B cell (primary cell): ENCODE measurements at regions of chr2 and their contacts with region 1.

Region 1: GRCh38 chr2:135797497-135798274 is 39.3 kb downstream of the LCT start:
- DNase-seq: peak; percentile 78
- ATAC-seq: peak; percentile 78
- H3K4me3 ChIP-seq: no peak overlapping the region
- H3K4me3 Mint-ChIP-seq: no peak overlapping the region
- H3K27ac ChIP-seq: no peak overlapping the region
- H3K27ac Mint-ChIP-seq: no peak overlapping the region
- H3K4me1 ChIP-seq: peaks cover 0 to 8% of the 10 kb centered on the region in 2 donors
- H3K4me1 Mint-ChIP-seq: peaks cover 13% of the 10 kb centered on the region
- H3K27me3 ChIP-seq: no peaks in the 10 kb centered on the region
- H3K27me3 Mint-ChIP-seq: no peaks in the 10 kb centered on the region
- CTCF ChIP-seq: peak; percentile 90

Region 2: GRCh38 chr2:134988994-134989605 is 808.6 kb before region 1 on chr2:
- CTCF ChIA-PET with region 1: interaction called, 35 read pairs
- POLR2A ChIA-PET with region 1: no interaction called
- intact Hi-C with region 1: loop called (anchors 1 kb)
- DNase-seq: peak; percentile 30
- ATAC-seq: no peak
- H3K4me3 ChIP-seq: no peak overlapping the region
- H3K4me3 Mint-ChIP-seq: no peak overlapping the region
- H3K27ac ChIP-seq: no peak overlapping the region
- H3K27ac Mint-ChIP-seq: no peak overlapping the region
- H3K4me1 ChIP-seq: no peaks in the 10 kb centered on the region
- H3K4me1 Mint-ChIP-seq: no peaks in the 10 kb centered on the region
- H3K27me3 ChIP-seq: no peaks in the 10 kb centered on the region
- H3K27me3 Mint-ChIP-seq: peaks cover 10% of the 10 kb centered on the region
- CTCF ChIP-seq: peak; percentile 69

Region 3: GRCh38 chr2:135785032-135785431 is 12.7 kb before region 1 on chr2:
- CTCF ChIA-PET with region 1: interaction called, 16 read pairs
- POLR2A ChIA-PET with region 1: interaction called, 4 read pairs
- intact Hi-C with region 1: no loop called
- DNase-seq: no peak
- ATAC-seq: no peak
- H3K4me3 ChIP-seq: no peak overlapping the region
- H3K4me3 Mint-ChIP-seq: no peak overlapping the region
- H3K27ac ChIP-seq: no peak overlapping the region
- H3K27ac Mint-ChIP-seq: no peak overlapping the region
- H3K4me1 ChIP-seq: no peaks in the 10 kb centered on the region
- H3K4me1 Mint-ChIP-seq: peaks cover 11% of the 10 kb centered on the region
- H3K27me3 ChIP-seq: no peaks in the 10 kb centered on the region
- H3K27me3 Mint-ChIP-seq: no peaks in the 10 kb centered on the region
- CTCF ChIP-seq: peak; percentile 41